Activated CD4-positive, alpha-beta T cell treated with anti-CD3 and anti-CD28 coated beads, Interleukin-2, amount 10 ng/mL, durations not matched to agents 24 days and 14 days (primary cell): ENCODE measurements at regions of chr15 and their contacts with region 1.

Region 1: GRCh38 chr15:50908210-50909009 is at the start of gene AP4E1:
- DNase-seq: peak; percentile 98
- H3K4me3 Mint-ChIP-seq: peak within 1 kb of the TSS; percentile 87
- H3K27ac Mint-ChIP-seq: peak within 1 kb of the TSS; percentile 97
- H3K4me1 Mint-ChIP-seq: peaks cover 16% of the 10 kb centered on the region
- H3K27me3 Mint-ChIP-seq: no peaks in the 10 kb centered on the region
- total RNA-seq, gene AP4E1: 16.5 TPM in 2 replicates

Region 2: GRCh38 chr15:49155110-49155833 is 1753.1 kb before region 1 on chr15 and contains the start of gene COPS2:
- intact Hi-C with region 1: loop called (anchors 5 kb)
- DNase-seq: peak; percentile 98
- H3K4me3 Mint-ChIP-seq: peak within 1 kb of the TSS; percentile 99
- H3K27ac Mint-ChIP-seq: peak within 1 kb of the TSS; percentile 99
- H3K4me1 Mint-ChIP-seq: peaks cover 40% of the 10 kb centered on the region
- H3K27me3 Mint-ChIP-seq: peaks cover 1% of the 10 kb centered on the region
- total RNA-seq, gene COPS2: 98.6 and 99.0 TPM in 2 replicates

Region 3: DNA sequence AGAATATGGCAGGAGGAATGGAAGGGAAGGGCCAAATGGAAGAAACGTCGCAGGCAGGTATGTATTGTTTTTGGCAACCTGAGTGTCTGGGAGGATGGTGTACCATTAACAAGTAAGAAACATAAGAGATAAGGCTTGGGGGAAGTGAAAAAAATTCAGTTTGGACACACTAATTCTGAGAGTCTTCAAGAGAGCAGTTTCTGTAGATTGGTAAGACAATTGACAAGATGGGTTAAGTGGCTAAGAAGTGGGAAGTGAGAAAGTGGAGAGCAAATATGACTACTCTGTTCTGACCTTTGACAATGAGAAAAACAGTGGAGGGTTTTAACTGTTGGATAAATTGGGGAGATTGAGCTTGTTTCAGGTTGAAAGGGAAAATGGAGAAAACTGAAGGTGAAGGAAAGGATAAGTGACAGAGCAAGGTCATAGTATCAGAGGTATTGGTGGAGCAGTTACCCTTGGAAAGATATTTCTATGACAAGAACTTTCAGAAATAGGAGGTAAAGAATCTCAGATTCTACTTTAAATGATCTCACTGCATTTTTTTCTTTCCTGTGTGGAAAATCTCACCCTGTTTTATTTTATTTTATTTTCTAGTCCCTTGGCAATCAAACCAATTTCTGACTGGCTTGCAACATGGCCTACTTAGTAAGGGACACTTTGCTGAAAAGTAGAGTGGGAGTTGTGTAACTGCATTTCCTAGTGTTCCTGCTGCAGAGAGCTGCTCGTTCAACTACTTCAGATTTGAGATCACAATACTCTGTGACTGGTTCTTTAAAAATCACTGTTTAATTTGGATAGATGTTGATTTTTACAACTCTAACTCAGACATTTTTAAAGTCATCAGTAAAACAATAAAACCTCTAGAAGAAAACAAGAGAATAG is 530.3 kb before region 1 on chr15:
- intact Hi-C with region 1: loop called (anchors 1 kb)
- DNase-seq: no peak
- H3K4me3 Mint-ChIP-seq: peak overlapping the region; percentile 7
- H3K27ac Mint-ChIP-seq: peak overlapping the region; percentile 88
- H3K4me1 Mint-ChIP-seq: peaks cover 13% of the 10 kb centered on the region
- H3K27me3 Mint-ChIP-seq: no peaks in the 10 kb centered on the region

Region 4: GRCh38 chr15:50675536-50676144 is 232.8 kb before region 1 on chr15:
- intact Hi-C with region 1: loop called (anchors 1 kb)
- DNase-seq: no peak
- H3K4me3 Mint-ChIP-seq: no peak overlapping the region
- H3K27ac Mint-ChIP-seq: no peak overlapping the region
- H3K4me1 Mint-ChIP-seq: peaks cover 9% of the 10 kb centered on the region
- H3K27me3 Mint-ChIP-seq: no peaks in the 10 kb centered on the region

Region 5: GRCh38 chr15:50765195-50765973 is 143.0 kb before region 1 on chr15 and contains the start of gene SPPL2A:
- intact Hi-C with region 1: loop called (anchors 1 kb)
- DNase-seq: peak; percentile 94
- H3K4me3 Mint-ChIP-seq: peak within 1 kb of the TSS; percentile 92
- H3K27ac Mint-ChIP-seq: peak within 1 kb of the TSS; percentile 97
- H3K4me1 Mint-ChIP-seq: peaks cover 54% of the 10 kb centered on the region
- H3K27me3 Mint-ChIP-seq: no peaks in the 10 kb centered on the region
- total RNA-seq, gene SPPL2A: 85.0 and 86.6 TPM in 2 replicates

Region 6: DNA sequence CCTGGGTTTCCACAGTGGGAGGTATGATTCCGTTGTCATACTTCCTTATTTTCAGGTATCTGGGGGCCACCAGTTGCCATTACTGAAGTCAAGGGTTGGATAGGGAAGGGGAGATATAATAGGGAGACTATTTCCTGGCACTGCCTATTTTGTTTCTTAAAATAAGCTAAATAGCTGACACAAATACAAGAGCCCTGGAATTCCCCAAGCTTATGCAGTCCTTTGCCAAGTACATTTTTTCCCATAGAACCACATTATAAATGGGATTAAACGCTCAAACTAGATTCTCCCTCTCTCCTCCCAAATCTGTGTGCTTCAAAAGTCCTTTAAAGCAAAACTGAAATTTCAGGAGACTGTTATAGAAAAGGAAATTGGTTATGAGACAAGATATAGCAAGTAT is 68.8 kb after region 1 on chr15:
- intact Hi-C with region 1: no loop called
- DNase-seq: no peak
- H3K4me3 Mint-ChIP-seq: no peak overlapping the region
- H3K27ac Mint-ChIP-seq: no peak overlapping the region
- H3K4me1 Mint-ChIP-seq: peaks cover 5% of the 10 kb centered on the region
- H3K27me3 Mint-ChIP-seq: no peaks in the 10 kb centered on the region